ENCODE measurements at regions of chr4 and their contacts with region 1.

Region 1: GRCh38 chr4:68175562-68176155 is 46.0 kb upstream of the TMPRSS11F start:
- DNase-seq: peak; percentile 53
- H3K4me3 ChIP-seq: no peak overlapping the region
- H3K27ac ChIP-seq: no peak overlapping the region
- H3K4me1 ChIP-seq: peaks cover under 1% of the 10 kb centered on the region
- H3K27me3 ChIP-seq: no peaks in the 10 kb centered on the region
- CTCF ChIP-seq: peak; percentile 50 to 72

Region 2: DNA sequence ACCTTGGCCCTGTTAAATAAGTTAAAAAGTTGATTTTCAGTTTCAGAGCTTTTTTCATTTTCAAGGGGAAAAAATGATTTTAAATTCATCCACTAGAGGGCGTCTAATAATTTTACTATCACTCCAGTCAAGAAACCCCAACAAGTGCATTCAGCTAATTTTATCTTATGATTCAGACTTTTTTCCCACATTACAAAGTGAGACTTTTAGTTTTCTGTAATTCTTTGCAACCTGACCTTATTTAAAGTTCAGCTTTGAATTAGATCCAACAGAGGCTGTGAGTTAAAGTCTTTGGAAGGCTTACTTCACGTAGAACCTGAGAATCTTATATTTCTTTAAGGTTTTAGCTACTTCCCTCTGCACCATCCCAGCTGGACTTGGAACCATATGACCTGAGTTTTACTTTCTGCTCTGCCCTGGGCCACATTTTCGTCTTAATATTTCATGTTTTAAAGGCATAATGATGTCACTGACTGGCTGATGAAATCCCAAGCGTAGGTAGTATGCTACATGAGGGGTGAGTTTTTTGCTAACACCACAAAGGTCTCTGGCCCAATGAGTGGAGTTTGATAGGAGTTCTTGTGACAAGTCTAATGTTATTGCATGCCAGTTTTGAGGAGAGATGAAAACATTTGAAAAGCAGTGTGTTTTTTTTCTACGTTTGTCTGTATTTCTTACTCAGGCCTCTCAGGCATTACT is 428.7 kb before region 1 on chr4:
- CTCF ChIA-PET with region 1: no interaction called
- dilution Hi-C with region 1: no loop called
- in situ Hi-C with region 1: no loop called
- intact Hi-C with region 1: loop called (anchors 1 kb)
- DNase-seq: peak; percentile 43
- H3K4me3 ChIP-seq: no peak overlapping the region
- H3K27ac ChIP-seq: no peak overlapping the region
- H3K4me1 ChIP-seq: peaks cover 24% of the 10 kb centered on the region
- H3K27me3 ChIP-seq: no peaks in the 10 kb centered on the region
- CTCF ChIP-seq: peak; percentile 34 to 48

Region 3: GRCh38 chr4:67918428-67918827 is 257.2 kb before region 1 on chr4:
- CTCF ChIA-PET with region 1: no interaction called
- dilution Hi-C with region 1: no loop called
- in situ Hi-C with region 1: no loop called
- intact Hi-C with region 1: loop called (anchors 1 kb)
- DNase-seq: peak; percentile 8
- H3K4me3 ChIP-seq: no peak overlapping the region
- H3K27ac ChIP-seq: no peak overlapping the region
- H3K4me1 ChIP-seq: no peaks in the 10 kb centered on the region
- H3K27me3 ChIP-seq: no peaks in the 10 kb centered on the region
- CTCF ChIP-seq: peak; percentile 74 to 77

Region 4: DNA sequence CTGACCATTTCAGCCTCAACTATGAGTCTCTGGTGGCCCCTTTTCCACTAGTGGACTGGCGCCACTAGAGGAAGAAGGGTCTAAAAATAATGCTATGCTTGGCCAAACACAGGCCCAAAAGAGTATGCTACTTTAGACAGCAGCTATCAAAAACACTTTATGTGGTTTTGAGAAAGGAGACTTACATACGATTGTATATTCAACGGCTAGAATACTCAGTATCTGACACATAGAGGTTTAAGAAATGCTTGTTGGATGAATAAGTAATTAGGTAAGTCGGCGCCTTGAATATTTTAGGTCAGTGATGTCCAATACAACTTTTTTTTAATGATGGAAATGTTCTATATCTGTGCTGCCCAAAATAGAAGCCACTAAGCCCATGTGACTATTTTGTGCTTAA is 186.7 kb before region 1 on chr4:
- CTCF ChIA-PET with region 1: no interaction called
- dilution Hi-C with region 1: no loop called
- in situ Hi-C with region 1: loop called (anchors 5 to 10 kb)
- intact Hi-C with region 1: loop called (anchors 1 kb)
- DNase-seq: peak; percentile 20
- H3K4me3 ChIP-seq: no peak overlapping the region
- H3K27ac ChIP-seq: no peak overlapping the region
- H3K4me1 ChIP-seq: no peaks in the 10 kb centered on the region
- H3K27me3 ChIP-seq: no peaks in the 10 kb centered on the region
- CTCF ChIP-seq: no peak

Region 5: DNA sequence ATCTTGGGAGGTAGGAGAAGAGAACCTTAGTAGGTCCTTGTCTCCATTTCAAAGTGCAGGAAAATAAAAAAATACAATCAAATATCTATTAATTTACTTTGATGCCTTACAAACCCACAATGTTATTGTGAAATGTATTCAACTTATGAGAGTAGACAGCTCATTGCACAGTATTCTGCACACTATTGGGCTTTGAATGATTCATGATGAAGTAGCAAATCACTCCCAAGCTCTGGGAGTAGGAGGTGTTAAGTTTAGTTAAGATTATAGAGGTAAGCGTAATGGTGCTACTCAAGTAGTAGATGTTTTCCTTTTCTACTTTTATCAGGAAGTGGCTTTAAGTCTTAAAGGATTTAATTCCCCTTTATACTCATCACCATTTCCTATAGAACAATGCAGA is 179.5 kb before region 1 on chr4:
- CTCF ChIA-PET with region 1: no interaction called
- dilution Hi-C with region 1: no loop called
- in situ Hi-C with region 1: loop called (anchors 5 to 10 kb)
- intact Hi-C with region 1: no loop called
- DNase-seq: peak; percentile 20
- H3K4me3 ChIP-seq: no peak overlapping the region
- H3K27ac ChIP-seq: no peak overlapping the region
- H3K4me1 ChIP-seq: no peaks in the 10 kb centered on the region
- H3K27me3 ChIP-seq: no peaks in the 10 kb centered on the region
- CTCF ChIP-seq: no peak

Region 6: GRCh38 chr4:68074388-68074787 is 101.3 kb before region 1 on chr4:
- CTCF ChIA-PET with region 1: no interaction called
- dilution Hi-C with region 1: no loop called
- in situ Hi-C with region 1: no loop called
- intact Hi-C with region 1: loop called (anchors 1 kb)
- DNase-seq: peak; percentile 83
- H3K4me3 ChIP-seq: no peak overlapping the region
- H3K27ac ChIP-seq: no peak overlapping the region
- H3K4me1 ChIP-seq: peaks cover 5% of the 10 kb centered on the region
- H3K27me3 ChIP-seq: no peaks in the 10 kb centered on the region
- CTCF ChIP-seq: no peak

Region 7: DNA sequence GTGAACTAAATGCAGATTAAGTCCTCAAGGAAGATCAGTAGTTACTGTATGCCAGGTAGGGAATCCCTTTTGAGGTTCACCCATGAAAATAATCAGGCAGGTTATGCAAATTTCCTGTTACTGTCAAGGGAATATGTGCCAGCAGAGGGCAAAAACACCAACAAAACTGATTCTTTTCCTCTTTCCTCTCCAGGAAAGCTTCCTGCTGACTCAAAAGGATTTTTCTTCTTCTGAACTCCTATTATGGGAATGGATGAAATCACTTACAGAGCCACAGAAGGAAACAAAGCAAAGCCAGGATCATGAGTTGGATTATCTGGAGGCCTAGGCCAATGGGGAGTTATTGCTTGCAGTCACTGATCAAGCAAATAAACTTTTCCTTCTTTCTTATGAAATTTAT is 95.7 kb before region 1 on chr4:
- CTCF ChIA-PET with region 1: no interaction called
- dilution Hi-C with region 1: no loop called
- in situ Hi-C with region 1: no loop called
- intact Hi-C with region 1: loop called (anchors 1 kb)
- DNase-seq: no peak
- H3K4me3 ChIP-seq: no peak overlapping the region
- H3K27ac ChIP-seq: no peak overlapping the region
- H3K4me1 ChIP-seq: peaks cover under 1% of the 10 kb centered on the region
- H3K27me3 ChIP-seq: no peaks in the 10 kb centered on the region
- CTCF ChIP-seq: peak in 1 of 2 donors; percentile 30